ENCODE measurements at regions of chr4 and their contacts with region 1.

Region 1: DNA sequence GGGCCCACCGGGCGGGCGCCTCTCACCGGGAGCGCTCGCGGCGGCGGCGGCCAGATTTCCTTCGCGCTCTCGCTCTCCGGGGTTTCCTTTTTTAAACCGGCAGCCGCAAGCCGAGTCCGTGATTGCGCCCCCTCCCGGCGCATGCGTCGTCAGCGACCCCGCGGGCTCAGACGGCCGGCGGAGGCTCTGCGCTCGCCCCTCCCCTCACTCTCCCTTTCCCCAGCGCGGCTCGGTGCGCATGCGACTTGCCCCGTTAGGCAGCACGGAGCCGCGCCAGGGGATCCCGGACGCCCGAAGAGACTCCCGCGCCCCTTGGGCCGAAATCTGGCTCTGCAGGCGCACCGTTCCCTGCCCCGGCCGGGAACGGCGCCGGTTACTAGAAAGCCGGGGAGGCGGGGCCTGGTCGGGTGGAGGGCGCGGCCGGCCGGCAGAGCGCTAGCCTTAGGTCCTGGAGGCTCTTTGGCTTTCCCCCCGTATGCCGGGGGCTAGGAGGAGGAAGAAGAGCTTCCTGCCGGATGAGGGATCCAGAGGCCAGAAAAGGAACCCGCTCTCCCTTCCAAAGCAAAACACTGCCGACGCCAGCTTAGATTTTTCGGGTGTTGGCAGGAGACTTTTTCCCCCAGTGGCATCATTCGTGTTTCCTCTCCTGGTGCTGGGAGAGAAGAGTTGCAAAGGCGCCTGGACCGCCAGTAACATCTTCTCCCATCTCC is at the start of gene CLOCK:
- DNase-seq: peak; percentile 85 to 87 (median 85)
- H3K4me3 ChIP-seq: peak within 1 kb of the TSS; percentile 72 to 90
- H3K4me3 Mint-ChIP-seq: peak within 1 kb of the TSS; percentile 92 to 99 (median 96)
- H3K27ac ChIP-seq: peak within 1 kb of the TSS; percentile 75
- H3K27ac Mint-ChIP-seq: peak within 1 kb of the TSS; percentile 91 to 98 (median 95)
- H3K4me1 ChIP-seq: peaks cover 31% of the 10 kb centered on the region
- H3K4me1 Mint-ChIP-seq: peaks cover 32 to 67% (median 42%) of the 10 kb centered on the region in 4 donors
- H3K27me3 ChIP-seq: no peaks in the 10 kb centered on the region
- H3K27me3 Mint-ChIP-seq: no peaks in the 10 kb centered on the region
- total RNA-seq, gene CLOCK: 15.2 to 15.4 TPM

Region 2: GRCh38 chr4:54941994-54942552 is 604.8 kb before region 1 on chr4:
- CTCF ChIA-PET with region 1: no interaction called
- POLR2A ChIA-PET with region 1: no interaction called
- intact Hi-C with region 1: loop called (anchors 10 kb)
- DNase-seq: peak; percentile 62 to 80 (median 68)
- H3K4me3 ChIP-seq: peak overlapping the region in 1 of 2 donors; percentile 6
- H3K4me3 Mint-ChIP-seq: peak overlapping the region; percentile 58 to 83 (median 78)
- H3K27ac ChIP-seq: peak overlapping the region; percentile 49
- H3K27ac Mint-ChIP-seq: peak overlapping the region; percentile 86 to 96 (median 93)
- H3K4me1 ChIP-seq: peaks cover 28% of the 10 kb centered on the region
- H3K4me1 Mint-ChIP-seq: peaks cover 31 to 74% (median 50%) of the 10 kb centered on the region in 4 donors
- H3K27me3 ChIP-seq: no peaks in the 10 kb centered on the region
- H3K27me3 Mint-ChIP-seq: peaks cover 0 to 1% of the 10 kb centered on the region in 2 donors

Region 3: DNA sequence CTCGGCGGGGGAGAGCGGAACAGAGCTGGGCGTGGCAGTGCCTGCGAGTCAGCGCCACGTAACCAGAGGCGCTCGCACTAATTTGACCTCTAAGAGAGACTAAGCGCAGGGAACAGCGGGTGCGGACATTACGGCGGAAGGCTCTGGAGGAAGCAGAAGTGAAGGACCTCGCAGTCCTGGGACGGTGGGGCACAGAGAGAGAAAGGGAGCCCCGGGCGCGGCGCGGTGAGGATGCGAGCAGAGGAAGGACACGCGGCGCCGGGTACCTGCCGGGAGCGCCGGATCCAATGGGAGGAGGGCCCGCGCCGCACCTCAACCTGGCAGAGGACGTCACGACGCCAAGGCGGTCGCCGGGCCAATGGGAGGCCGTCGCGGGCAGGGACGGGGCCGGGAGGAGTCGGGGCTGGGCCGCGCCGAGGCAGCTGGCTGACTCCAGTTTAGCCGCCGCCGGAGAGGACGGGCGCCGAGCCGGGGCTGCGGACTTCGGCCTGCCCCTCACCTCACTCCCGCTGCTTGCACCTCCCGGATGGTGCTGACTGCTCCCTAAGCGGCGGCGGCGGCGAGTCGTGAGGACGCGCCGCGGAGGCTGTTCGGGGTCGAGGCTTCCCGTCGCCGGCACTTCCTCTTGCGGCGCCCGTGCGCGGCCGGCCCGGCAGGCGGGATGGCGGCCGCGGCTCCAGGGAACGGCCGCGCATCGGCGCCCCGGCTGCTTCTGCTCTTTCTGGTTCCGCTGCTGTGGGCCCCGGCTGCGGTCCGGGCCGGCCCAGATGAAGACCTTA is 151.2 kb before region 1 on chr4 and contains the start of gene TMEM165:
- CTCF ChIA-PET with region 1: interaction called, 9 read pairs
- POLR2A ChIA-PET with region 1: interaction called, 53 read pairs
- intact Hi-C with region 1: loop called (anchors 1 kb)
- DNase-seq: peak; percentile 88 to 92 (median 90)
- H3K4me3 ChIP-seq: peak within 1 kb of the TSS; percentile 74 to 75
- H3K4me3 Mint-ChIP-seq: peak within 1 kb of the TSS; percentile 92 to 98 (median 96)
- H3K27ac ChIP-seq: peak within 1 kb of the TSS; percentile 84
- H3K27ac Mint-ChIP-seq: peak within 1 kb of the TSS; percentile 93 to 99 (median 98)
- H3K4me1 ChIP-seq: peaks cover 39% of the 10 kb centered on the region
- H3K4me1 Mint-ChIP-seq: peaks cover 30 to 48% (median 38%) of the 10 kb centered on the region in 4 donors
- H3K27me3 ChIP-seq: no peaks in the 10 kb centered on the region
- H3K27me3 Mint-ChIP-seq: no peaks in the 10 kb centered on the region
- total RNA-seq, gene TMEM165: 61.8 to 74.8 TPM

Region 4: GRCh38 chr4:55483310-55483709 is 63.6 kb before region 1 on chr4:
- CTCF ChIA-PET with region 1: interaction called, 3 read pairs
- POLR2A ChIA-PET with region 1: no interaction called
- intact Hi-C with region 1: loop called (anchors 5 kb)
- DNase-seq: no peak
- H3K4me3 ChIP-seq: no peak overlapping the region
- H3K4me3 Mint-ChIP-seq: no peak overlapping the region
- H3K27ac ChIP-seq: no peak overlapping the region
- H3K27ac Mint-ChIP-seq: no peak overlapping the region
- H3K4me1 ChIP-seq: no peaks in the 10 kb centered on the region
- H3K4me1 Mint-ChIP-seq: no peaks in the 10 kb centered on the region
- H3K27me3 ChIP-seq: no peaks in the 10 kb centered on the region
- H3K27me3 Mint-ChIP-seq: no peaks in the 10 kb centered on the region

Region 5: DNA sequence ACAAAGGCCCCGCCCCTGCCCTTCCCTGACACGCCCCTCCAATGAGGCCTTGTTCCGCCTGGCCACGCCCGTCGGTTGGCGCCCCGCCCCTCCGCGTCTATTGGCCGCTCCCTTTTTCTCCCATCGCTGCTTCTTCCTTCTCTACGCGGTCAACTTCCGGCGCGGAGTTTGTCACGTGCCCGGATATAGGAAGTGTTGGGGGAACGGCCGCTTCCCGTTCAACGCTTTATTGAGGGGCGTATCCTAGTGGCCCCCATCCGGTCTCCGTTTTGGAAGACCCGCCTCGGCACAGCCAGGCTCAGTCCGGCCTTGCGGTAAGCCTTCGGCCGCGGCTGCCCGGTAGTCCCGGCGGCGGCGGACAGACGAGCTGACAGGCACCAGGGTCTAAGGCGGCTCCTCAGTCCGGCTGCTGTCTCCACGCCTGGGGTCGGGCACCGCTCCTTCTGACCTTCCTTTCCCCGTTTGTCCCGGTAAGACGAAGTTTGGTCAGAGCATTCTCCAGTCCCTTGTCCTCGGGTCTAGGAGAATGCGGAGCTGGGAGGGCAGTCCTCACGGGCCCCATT is 306.7 kb after region 1 on chr4 and contains the start of gene EXOC1:
- CTCF ChIA-PET with region 1: interaction called, 3 read pairs
- POLR2A ChIA-PET with region 1: interaction called, 11 read pairs
- intact Hi-C with region 1: loop called (anchors 1 kb)
- DNase-seq: peak; percentile 93 to 96 (median 93)
- H3K4me3 ChIP-seq: peak within 1 kb of the TSS; percentile 83 to 97
- H3K4me3 Mint-ChIP-seq: peak within 1 kb of the TSS in 4 of 8 donors; percentile 40 to 67 (median 46)
- H3K27ac ChIP-seq: peak within 1 kb of the TSS; percentile 81
- H3K27ac Mint-ChIP-seq: peak within 1 kb of the TSS in 5 of 7 donors; percentile 36 to 96 (median 84)
- H3K4me1 ChIP-seq: peaks cover 44% of the 10 kb centered on the region
- H3K4me1 Mint-ChIP-seq: peaks cover 30 to 47% (median 38%) of the 10 kb centered on the region in 4 donors
- H3K27me3 ChIP-seq: no peaks in the 10 kb centered on the region
- H3K27me3 Mint-ChIP-seq: no peaks in the 10 kb centered on the region
- total RNA-seq, gene EXOC1: 41.9 to 50.7 TPM

Region 6: GRCh38 chr4:55948726-55949474 is 402.0 kb after region 1 on chr4 and contains the start of gene CEP135:
- CTCF ChIA-PET with region 1: interaction called, 4 read pairs
- POLR2A ChIA-PET with region 1: interaction called, 13 read pairs
- intact Hi-C with region 1: loop called (anchors 5 kb)
- DNase-seq: peak; percentile 91 to 94 (median 93)
- H3K4me3 ChIP-seq: peak within 1 kb of the TSS; percentile 54 to 65
- H3K4me3 Mint-ChIP-seq: peak within 1 kb of the TSS; percentile 88 to 97 (median 94)
- H3K27ac ChIP-seq: peak within 1 kb of the TSS; percentile 71
- H3K27ac Mint-ChIP-seq: peak within 1 kb of the TSS; percentile 93 to 98 (median 97)
- H3K4me1 ChIP-seq: peaks cover 45% of the 10 kb centered on the region
- H3K4me1 Mint-ChIP-seq: peaks cover 32 to 58% (median 48%) of the 10 kb centered on the region in 4 donors
- H3K27me3 ChIP-seq: no peaks in the 10 kb centered on the region
- H3K27me3 Mint-ChIP-seq: no peaks in the 10 kb centered on the region
- total RNA-seq, gene CEP135: 32.5 to 35.9 TPM

Region 7: GRCh38 chr4:56907489-56908205 is 1360.7 kb after region 1 on chr4 and contains the start of gene REST:
- CTCF ChIA-PET with region 1: no interaction called
- POLR2A ChIA-PET with region 1: interaction called, 5 read pairs
- intact Hi-C with region 1: loop called (anchors 5 kb)
- DNase-seq: peak; percentile 80 to 91 (median 86)
- H3K4me3 ChIP-seq: peak within 1 kb of the TSS; percentile 58 to 79
- H3K4me3 Mint-ChIP-seq: peak within 1 kb of the TSS; percentile 89 to 97 (median 93)
- H3K27ac ChIP-seq: peak within 1 kb of the TSS; percentile 85
- H3K27ac Mint-ChIP-seq: peak within 1 kb of the TSS; percentile 87 to 97 (median 93)
- H3K4me1 ChIP-seq: peaks cover 42% of the 10 kb centered on the region
- H3K4me1 Mint-ChIP-seq: peaks cover 30 to 54% (median 43%) of the 10 kb centered on the region in 4 donors
- H3K27me3 ChIP-seq: no peaks in the 10 kb centered on the region
- H3K27me3 Mint-ChIP-seq: no peaks in the 10 kb centered on the region
- total RNA-seq, gene REST: 77.3 to 79.2 TPM

Measured in CD4-positive, alpha-beta memory T cell (primary cell).